CD8-positive, alpha-beta T cell (primary cell): ENCODE measurements at regions of chr17 and their contacts with region 1.

Region 1: DNA sequence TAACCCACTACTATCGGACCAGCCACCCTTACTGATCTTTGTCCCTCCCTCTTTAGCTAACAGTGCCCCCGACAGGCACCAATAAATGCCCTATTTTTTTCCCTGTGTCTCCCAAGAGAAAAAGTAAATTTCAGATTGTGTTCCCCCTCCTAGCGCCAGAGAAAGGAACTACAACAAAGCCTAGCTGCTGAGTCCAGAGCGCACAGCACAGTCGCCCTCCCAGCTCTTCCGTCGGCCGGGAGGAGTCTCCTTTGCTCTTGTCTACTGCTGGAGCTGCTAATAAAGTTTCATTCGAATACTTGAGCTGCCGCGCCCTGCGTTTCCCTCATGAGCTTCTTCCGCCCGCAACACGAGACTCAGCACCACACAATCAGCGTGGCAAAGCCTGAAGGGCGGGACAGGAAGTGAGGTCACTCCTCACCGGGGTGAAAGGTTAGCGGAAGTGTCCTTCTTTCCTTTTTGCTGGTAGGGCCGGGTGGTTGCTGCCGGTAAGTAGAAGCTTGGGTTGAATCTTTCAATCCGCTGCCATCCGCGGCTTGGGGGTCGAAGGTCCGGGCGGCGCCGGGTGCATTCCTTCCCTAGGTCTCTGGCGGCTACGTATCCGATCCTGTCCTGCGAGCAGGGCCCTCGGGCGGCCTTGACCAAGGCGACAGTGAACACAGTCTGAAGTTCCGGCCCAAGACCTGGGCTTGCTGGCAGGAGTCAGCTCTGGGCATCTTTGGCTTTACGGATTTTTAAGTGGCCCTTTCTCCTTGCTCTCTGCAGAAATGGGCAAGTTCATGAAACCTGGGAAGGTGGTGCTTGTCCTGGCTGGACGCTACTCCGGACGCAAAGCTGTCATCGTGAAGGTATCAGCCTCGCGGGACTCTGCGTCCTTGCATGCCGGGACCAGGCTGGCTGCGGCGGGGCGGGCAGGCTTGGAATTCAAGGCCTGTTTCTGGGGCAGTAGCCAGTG is at the start of gene RPL27:
- DNase-seq: peak; percentile 95 to 100 (median 98)
- ATAC-seq: peak; percentile 93
- H3K4me3 ChIP-seq: peak within 1 kb of the TSS; percentile 61 to 89
- H3K4me3 Mint-ChIP-seq: peak within 1 kb of the TSS; percentile 94
- H3K27ac ChIP-seq: peak within 1 kb of the TSS; percentile 90 to 95
- H3K27ac Mint-ChIP-seq: peak within 1 kb of the TSS; percentile 99
- H3K4me1 ChIP-seq: peaks cover 16% of the 10 kb centered on the region
- H3K4me1 Mint-ChIP-seq: peaks cover 25% of the 10 kb centered on the region
- H3K27me3 ChIP-seq: no peaks in the 10 kb centered on the region
- H3K27me3 Mint-ChIP-seq: no peaks in the 10 kb centered on the region
- CTCF ChIP-seq: peak; percentile 90
- total RNA-seq, gene RPL27: 1,796 to 1,873 TPM

Region 2: GRCh38 chr17:42153919-42154742 is 844.1 kb before region 1 on chr17:
- CTCF ChIA-PET with region 1: no interaction called
- POLR2A ChIA-PET with region 1: no interaction called
- intact Hi-C with region 1: loop called in 1 of 2 experiments (anchors 2 kb)
- DNase-seq: peak in 2 of 9 experiments; percentile 20 to 40
- ATAC-seq: no peak
- H3K4me3 ChIP-seq: peak overlapping the region; percentile 94 to 95
- H3K4me3 Mint-ChIP-seq: peak overlapping the region; percentile 98
- H3K27ac ChIP-seq: peak overlapping the region; percentile 78 to 87
- H3K27ac Mint-ChIP-seq: peak overlapping the region; percentile 95
- H3K4me1 ChIP-seq: peaks cover 24% of the 10 kb centered on the region
- H3K4me1 Mint-ChIP-seq: peaks cover 39% of the 10 kb centered on the region
- H3K27me3 ChIP-seq: no peaks in the 10 kb centered on the region
- H3K27me3 Mint-ChIP-seq: no peaks in the 10 kb centered on the region
- CTCF ChIP-seq: no peak

Region 3: DNA sequence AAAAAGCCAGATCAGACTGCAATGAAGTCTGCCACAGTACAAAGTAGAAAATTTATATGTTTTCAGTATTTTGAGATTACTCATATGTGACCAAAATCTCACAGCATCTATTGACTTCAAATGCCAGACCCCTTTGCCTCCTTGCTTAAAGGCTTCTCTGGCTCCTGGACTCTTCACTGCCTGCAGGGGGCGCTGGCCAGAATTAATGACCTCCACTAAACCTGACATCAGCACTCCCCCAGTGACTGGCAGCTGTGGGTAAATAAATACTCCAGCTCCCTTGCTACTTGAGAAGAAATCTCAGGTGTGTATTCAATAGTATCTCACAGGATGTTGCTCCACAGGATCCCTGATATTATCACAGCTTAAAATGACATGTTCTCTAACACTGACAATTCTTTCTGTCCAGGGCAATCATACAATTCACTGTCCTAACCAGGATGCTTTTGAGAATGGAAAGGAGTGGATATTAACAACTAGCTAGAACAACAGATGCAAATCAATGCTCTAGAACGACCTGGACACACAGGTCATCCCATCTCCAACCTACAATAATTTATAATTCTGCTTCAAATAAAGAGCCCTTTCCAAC is 178.2 kb before region 1 on chr17:
- CTCF ChIA-PET with region 1: interaction called, 4 read pairs
- POLR2A ChIA-PET with region 1: interaction called, 3 read pairs
- intact Hi-C with region 1: loop called (anchors 1 to 2 kb)
- DNase-seq: peak; percentile 26 to 74 (median 63)
- ATAC-seq: peak; percentile 24
- H3K4me3 ChIP-seq: no peak overlapping the region
- H3K4me3 Mint-ChIP-seq: no peak overlapping the region
- H3K27ac ChIP-seq: no peak overlapping the region
- H3K27ac Mint-ChIP-seq: no peak overlapping the region
- H3K4me1 ChIP-seq: peaks cover 13% of the 10 kb centered on the region
- H3K4me1 Mint-ChIP-seq: peaks cover 34% of the 10 kb centered on the region
- H3K27me3 ChIP-seq: no peaks in the 10 kb centered on the region
- H3K27me3 Mint-ChIP-seq: no peaks in the 10 kb centered on the region
- CTCF ChIP-seq: peak; percentile 73

Region 4: GRCh38 chr17:43024407-43025289 is 26.4 kb after region 1 on chr17 and contains the start of gene RND2:
- CTCF ChIA-PET with region 1: interaction called, 11 read pairs
- POLR2A ChIA-PET with region 1: interaction called, 33 read pairs
- intact Hi-C with region 1: loop called in 1 of 2 experiments (anchors 1 kb)
- DNase-seq: peak; percentile 56 to 90 (median 81)
- ATAC-seq: peak; percentile 67
- H3K4me3 ChIP-seq: peak within 1 kb of the TSS; percentile 70 to 99
- H3K4me3 Mint-ChIP-seq: peak within 1 kb of the TSS; percentile 90
- H3K27ac ChIP-seq: peak within 1 kb of the TSS; percentile 1 to 72
- H3K27ac Mint-ChIP-seq: peak within 1 kb of the TSS; percentile 83
- H3K4me1 ChIP-seq: peaks cover 22% of the 10 kb centered on the region
- H3K4me1 Mint-ChIP-seq: peaks cover 26% of the 10 kb centered on the region
- H3K27me3 ChIP-seq: no peaks in the 10 kb centered on the region
- H3K27me3 Mint-ChIP-seq: no peaks in the 10 kb centered on the region
- CTCF ChIP-seq: peak; percentile 45
- total RNA-seq, gene RND2: 0.30 TPM in 1 of 2 experiments, not detected in the other

Region 5: DNA sequence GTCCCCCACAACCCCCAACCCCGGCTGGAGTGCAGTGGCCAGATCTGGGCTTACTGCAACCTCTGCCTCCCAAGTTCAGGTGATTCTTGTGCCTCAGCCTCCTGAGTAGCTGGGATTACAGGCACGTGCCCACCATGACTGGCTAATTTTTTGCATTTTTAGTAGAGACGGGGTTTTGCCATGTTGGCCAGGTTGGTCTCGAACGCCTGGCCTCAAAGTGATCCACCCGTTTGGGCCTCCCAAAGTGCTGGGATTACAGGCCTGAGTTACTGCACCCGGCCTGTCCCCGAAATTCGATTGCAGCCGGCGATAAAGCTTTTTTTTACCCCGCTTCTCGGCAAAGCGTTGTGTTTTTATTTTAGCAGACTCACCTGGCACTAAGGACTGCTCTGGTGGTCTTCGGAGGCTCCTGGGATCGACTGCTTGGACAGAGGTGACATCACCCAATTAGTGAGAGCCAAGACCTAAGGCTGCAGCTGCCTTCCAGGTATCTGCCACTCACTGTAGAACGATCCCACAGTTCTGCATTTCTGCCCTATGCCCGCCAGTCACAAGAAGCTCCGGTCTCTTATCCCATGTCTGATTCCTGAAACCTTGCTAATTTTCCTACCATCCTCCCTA is 318.4 kb after region 1 on chr17:
- CTCF ChIA-PET with region 1: no interaction called
- POLR2A ChIA-PET with region 1: interaction called, 27 read pairs
- intact Hi-C with region 1: no loop called
- DNase-seq: peak in 5 of 9 experiments; percentile 14 to 59 (median 49)
- ATAC-seq: no peak
- H3K4me3 ChIP-seq: no peak overlapping the region
- H3K4me3 Mint-ChIP-seq: peak overlapping the region; percentile 6
- H3K27ac ChIP-seq: no peak overlapping the region
- H3K27ac Mint-ChIP-seq: peak overlapping the region; percentile 41
- H3K4me1 ChIP-seq: no peaks in the 10 kb centered on the region
- H3K4me1 Mint-ChIP-seq: peaks cover 15% of the 10 kb centered on the region
- H3K27me3 ChIP-seq: no peaks in the 10 kb centered on the region
- H3K27me3 Mint-ChIP-seq: no peaks in the 10 kb centered on the region
- CTCF ChIP-seq: no peak

Region 6: GRCh38 chr17:43388359-43389045 is 390.2 kb after region 1 on chr17:
- CTCF ChIA-PET with region 1: no interaction called
- POLR2A ChIA-PET with region 1: interaction called, 21 read pairs
- intact Hi-C with region 1: loop called in 1 of 2 experiments (anchors 1 kb)
- DNase-seq: peak; percentile 88 to 96 (median 90)
- ATAC-seq: peak; percentile 71
- H3K4me3 ChIP-seq: peak overlapping the region; percentile 74 to 94
- H3K4me3 Mint-ChIP-seq: peak overlapping the region; percentile 89
- H3K27ac ChIP-seq: peak overlapping the region; percentile 94 to 96
- H3K27ac Mint-ChIP-seq: peak overlapping the region; percentile 97
- H3K4me1 ChIP-seq: peaks cover 14% of the 10 kb centered on the region
- H3K4me1 Mint-ChIP-seq: peaks cover 37% of the 10 kb centered on the region
- H3K27me3 ChIP-seq: no peaks in the 10 kb centered on the region
- H3K27me3 Mint-ChIP-seq: no peaks in the 10 kb centered on the region
- CTCF ChIP-seq: no peak

Region 7: GRCh38 chr17:43628089-43628650 is 629.9 kb after region 1 on chr17:
- CTCF ChIA-PET with region 1: no interaction called
- POLR2A ChIA-PET with region 1: no interaction called
- intact Hi-C with region 1: no loop called
- DNase-seq: no peak
- ATAC-seq: no peak
- H3K4me3 ChIP-seq: no peak overlapping the region
- H3K4me3 Mint-ChIP-seq: no peak overlapping the region
- H3K27ac ChIP-seq: no peak overlapping the region
- H3K27ac Mint-ChIP-seq: no peak overlapping the region
- H3K4me1 ChIP-seq: no peaks in the 10 kb centered on the region
- H3K4me1 Mint-ChIP-seq: no peaks in the 10 kb centered on the region
- H3K27me3 ChIP-seq: no peaks in the 10 kb centered on the region
- H3K27me3 Mint-ChIP-seq: peaks cover 21% of the 10 kb centered on the region
- CTCF ChIP-seq: no peak